ENCODE measurements at regions of chr5 and their contacts with region 1.

Region 1: GRCh38 chr5:15003511-15003920 is 131.9 kb upstream of the ANKH start:
- DNase-seq: peak in 1 of 2 donors; percentile 81
- H3K4me3 ChIP-seq: no peak overlapping the region
- H3K27ac ChIP-seq: no peak overlapping the region
- H3K4me1 ChIP-seq: peaks cover 7 to 14% of the 10 kb centered on the region in 2 donors
- H3K27me3 ChIP-seq: no peaks in the 10 kb centered on the region
- CTCF ChIP-seq: peak; percentile 59 to 75 (median 62)

Region 2: DNA sequence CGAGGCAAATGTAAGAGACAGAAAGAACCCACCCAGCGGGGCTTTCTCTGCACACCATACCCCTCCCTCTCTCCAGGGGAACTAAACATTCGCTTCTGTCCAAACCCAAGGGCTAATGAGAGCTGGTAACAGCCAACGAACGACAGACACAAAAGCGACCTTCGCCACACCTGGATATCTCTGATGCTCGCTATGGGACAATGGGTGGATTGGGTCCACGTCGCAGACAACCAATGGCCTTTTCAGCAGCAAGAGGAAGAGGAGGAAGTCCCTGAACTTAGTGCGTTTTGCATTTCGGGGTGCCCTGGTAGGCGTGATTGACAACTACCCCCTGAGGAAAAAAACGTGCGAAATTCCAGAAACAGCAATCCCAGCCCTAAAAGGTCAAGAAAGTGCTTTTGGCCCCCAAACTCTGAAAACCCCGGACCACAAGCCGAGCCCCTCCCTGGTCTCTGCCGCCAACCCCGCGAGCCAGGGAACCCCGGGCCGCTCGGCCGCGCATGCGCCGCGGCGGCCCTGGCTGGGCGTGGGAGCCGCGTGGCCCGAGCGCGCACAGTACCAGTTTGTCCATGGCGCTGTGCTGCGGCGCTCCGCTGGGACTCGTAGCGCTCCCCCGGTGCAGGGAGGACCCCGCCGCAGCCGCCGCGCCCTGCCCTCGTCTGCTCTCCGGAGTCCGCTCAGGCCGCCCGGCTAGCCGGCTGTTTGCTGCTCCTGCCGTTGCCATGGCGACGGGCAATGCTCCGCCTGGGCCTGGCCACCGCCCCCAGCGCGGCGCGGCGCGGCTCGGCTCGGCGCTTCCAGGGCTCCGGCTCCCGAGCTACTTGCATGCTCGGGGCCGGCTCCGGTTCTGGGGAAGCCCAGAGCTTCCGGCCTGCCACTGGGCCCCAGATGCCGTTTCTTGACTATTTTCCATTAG is 992.2 kb before region 1 on chr5:
- intact Hi-C with region 1: loop called (anchors 10 kb)
- DNase-seq: peak; percentile 43 to 90
- H3K4me3 ChIP-seq: peak overlapping the region; percentile 51 to 65
- H3K27ac ChIP-seq: peak overlapping the region; percentile 9 to 13
- H3K4me1 ChIP-seq: peaks cover 4 to 5% of the 10 kb centered on the region in 2 donors
- H3K27me3 ChIP-seq: no peaks in the 10 kb centered on the region
- CTCF ChIP-seq: no peak

Region 3: DNA sequence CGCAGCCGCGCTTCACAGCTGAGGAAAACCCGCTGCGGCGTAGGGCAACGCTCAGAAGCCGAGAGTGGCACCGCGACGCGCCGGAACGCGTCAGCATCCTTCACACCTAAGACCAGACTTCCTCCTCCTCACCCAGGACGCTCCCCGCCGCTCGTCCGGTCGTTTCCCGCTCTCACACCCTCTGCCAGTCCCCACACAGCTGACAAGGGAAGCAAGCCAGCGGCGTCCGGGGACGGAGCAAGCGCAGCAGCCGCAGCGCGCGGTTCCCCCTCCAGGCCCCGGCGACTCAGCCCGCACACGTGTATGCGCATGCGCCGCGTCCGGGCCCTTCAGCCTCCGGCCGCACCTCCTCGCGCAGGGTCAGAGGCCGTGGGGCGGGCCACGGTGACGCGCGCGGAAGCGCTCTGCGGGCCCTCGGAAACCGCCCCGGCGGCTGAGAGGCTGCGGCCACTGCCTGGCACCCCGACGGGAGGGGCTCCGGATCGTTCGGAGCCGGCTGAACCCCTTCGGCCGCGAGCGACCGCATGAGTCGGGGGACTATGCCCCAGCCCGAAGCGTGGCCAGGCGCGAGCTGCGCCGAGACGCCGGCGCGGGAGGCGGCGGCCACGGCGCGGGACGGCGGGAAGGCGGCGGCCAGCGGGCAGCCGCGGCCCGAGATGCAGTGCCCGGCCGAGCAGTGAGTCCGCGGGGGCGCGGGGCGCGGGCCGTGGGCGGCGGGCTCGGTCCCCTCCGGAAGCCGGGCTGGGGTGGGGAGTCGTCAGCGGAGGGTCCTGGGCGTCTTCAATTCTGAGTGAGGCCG is 339.0 kb before region 1 on chr5 and contains the start of gene OTULIN:
- intact Hi-C with region 1: loop called (anchors 5 kb)
- DNase-seq: peak; percentile 70 to 95
- H3K4me3 ChIP-seq: peak within 1 kb of the TSS; percentile 72 to 83
- H3K27ac ChIP-seq: peak within 1 kb of the TSS; percentile 93 to 97
- H3K4me1 ChIP-seq: peaks cover 5 to 30% of the 10 kb centered on the region in 2 donors
- H3K27me3 ChIP-seq: no peaks in the 10 kb centered on the region
- CTCF ChIP-seq: peak in 1 of 3 experiments; percentile 5
- total RNA-seq, gene OTULIN: 56.9 TPM

Region 4: DNA sequence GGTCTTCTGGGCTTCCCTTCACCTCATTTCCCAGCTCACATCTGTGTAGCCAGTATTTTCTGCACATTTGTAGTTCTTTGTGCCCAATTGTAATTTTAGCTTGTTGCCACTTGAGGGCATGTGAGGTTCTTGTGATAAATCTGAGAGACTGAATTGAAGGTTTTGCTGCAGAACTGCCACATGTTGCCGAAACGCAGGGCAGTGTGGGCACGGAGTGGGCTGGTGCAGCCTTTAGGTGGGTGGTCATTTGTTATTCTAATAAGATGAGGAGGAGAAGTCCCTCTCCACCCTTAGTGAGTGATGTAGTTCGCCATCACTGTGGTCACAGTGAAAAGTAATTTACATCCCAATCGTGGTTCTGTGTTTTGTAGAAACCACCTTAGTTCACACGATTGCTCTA is 317.8 kb before region 1 on chr5:
- intact Hi-C with region 1: loop called (anchors 2 kb)
- DNase-seq: no peak
- H3K4me3 ChIP-seq: no peak overlapping the region
- H3K27ac ChIP-seq: no peak overlapping the region
- H3K4me1 ChIP-seq: peaks cover 0 to 28% of the 10 kb centered on the region in 2 donors
- H3K27me3 ChIP-seq: no peaks in the 10 kb centered on the region
- CTCF ChIP-seq: peak; percentile 69 to 79 (median 72)

Region 5: DNA sequence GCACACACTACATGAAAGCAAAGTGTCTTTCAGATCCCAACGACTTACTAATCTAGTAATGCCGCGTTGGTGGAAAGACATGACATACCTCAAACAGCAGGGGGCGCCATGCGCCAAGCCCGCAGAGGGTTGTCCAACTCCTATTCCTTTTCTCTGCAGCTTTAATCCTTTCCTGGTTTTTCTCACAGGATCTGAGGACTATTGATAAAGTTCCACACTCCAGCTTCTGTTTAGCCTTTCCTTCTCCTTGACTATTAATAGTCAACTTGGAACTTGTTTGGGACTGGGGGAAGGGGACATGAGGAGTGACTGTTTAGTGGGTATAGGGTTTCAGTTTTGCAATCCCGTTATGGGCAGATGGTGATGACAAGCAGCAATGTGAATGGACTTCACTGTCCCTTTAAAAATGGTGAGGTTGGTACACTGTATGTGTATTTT is 276.1 kb before region 1 on chr5:
- intact Hi-C with region 1: loop called (anchors 1 kb)
- DNase-seq: peak in 1 of 2 donors; percentile 88
- H3K4me3 ChIP-seq: no peak overlapping the region
- H3K27ac ChIP-seq: peak overlapping the region in 1 of 2 donors; percentile 58
- H3K4me1 ChIP-seq: peaks cover 2 to 16% of the 10 kb centered on the region in 2 donors
- H3K27me3 ChIP-seq: no peaks in the 10 kb centered on the region
- CTCF ChIP-seq: peak; percentile 91 to 93 (median 92)

Region 6: GRCh38 chr5:14816999-14817761 is 186.3 kb before region 1 on chr5:
- intact Hi-C with region 1: loop called (anchors 5 kb)
- DNase-seq: peak; percentile 31 to 88
- H3K4me3 ChIP-seq: peak overlapping the region in 1 of 2 donors; percentile 13
- H3K27ac ChIP-seq: peak overlapping the region; percentile 61 to 66
- H3K4me1 ChIP-seq: peaks cover 0 to 40% of the 10 kb centered on the region in 2 donors
- H3K27me3 ChIP-seq: no peaks in the 10 kb centered on the region
- CTCF ChIP-seq: no peak

Region 7: GRCh38 chr5:14871210-14872069 is 132.1 kb before region 1 on chr5 and contains the start of gene ANKH:
- intact Hi-C with region 1: loop called (anchors 2 kb)
- DNase-seq: peak in 1 of 2 donors; percentile 92
- H3K4me3 ChIP-seq: peak within 1 kb of the TSS; percentile 80 to 98
- H3K27ac ChIP-seq: peak within 1 kb of the TSS; percentile 94 to 100
- H3K4me1 ChIP-seq: no peaks in the 10 kb centered on the region
- H3K27me3 ChIP-seq: no peaks in the 10 kb centered on the region
- CTCF ChIP-seq: peak in 2 of 3 experiments; percentile 2 to 35
- total RNA-seq, gene ANKH: 388 TPM